ENCODE measurements at regions of chr7 and their contacts with region 1.

Region 1: DNA sequence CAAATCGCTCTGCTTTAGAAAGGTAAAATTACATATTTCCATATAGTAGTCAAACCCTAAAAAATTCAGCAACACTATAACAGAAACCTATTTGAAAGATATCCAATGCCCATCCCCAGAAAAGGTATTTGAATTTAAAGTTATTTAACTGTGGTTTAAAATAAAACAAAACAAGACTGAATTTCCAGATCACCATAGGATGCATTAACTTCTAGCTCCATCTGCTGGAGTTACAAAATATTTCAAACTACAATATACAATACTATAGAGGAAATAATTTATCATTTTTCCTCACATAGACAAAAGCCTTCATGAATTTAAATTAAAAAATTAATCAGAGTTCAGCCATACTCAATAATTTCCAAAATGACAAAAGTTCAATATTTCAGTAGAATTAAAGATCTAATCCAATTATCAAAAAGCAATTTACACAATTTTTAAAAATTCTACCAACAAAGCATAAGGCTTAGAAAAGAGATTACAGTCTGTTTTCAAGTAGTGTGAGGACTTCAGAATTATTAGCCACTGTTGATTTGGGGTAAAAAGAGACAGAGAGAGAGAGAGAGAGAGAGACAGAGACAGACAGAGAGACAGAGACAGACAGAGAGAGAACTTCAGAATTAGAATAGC is 75.9 kb downstream of the LMBR1 start:
- DNase-seq: no peak
- H3K4me3 ChIP-seq: no peak overlapping the region
- H3K27ac ChIP-seq: no peak overlapping the region
- H3K4me1 ChIP-seq: no peaks in the 10 kb centered on the region
- H3K27me3 ChIP-seq: no peaks in the 10 kb centered on the region
- CTCF ChIP-seq: peak in 3 of 5 experiments; percentile 24 to 28 (median 26)
- EP300 ChIP-seq: no peak
- POLR2A ChIP-seq: no peak

Region 2: GRCh38 chr7:155796381-155797261 is 1020.4 kb before region 1 on chr7:
- in situ Hi-C with region 1: loop called in 2 of 4 experiments (anchors 25 kb)
- intact Hi-C with region 1: no loop called
- DNase-seq: peak; percentile 73
- H3K4me3 ChIP-seq: no peak overlapping the region
- H3K27ac ChIP-seq: no peak overlapping the region
- H3K4me1 ChIP-seq: peaks cover 0 to 8% (median 8%) of the 10 kb centered on the region in 4 donors
- H3K27me3 ChIP-seq: peaks cover 57% of the 10 kb centered on the region
- CTCF ChIP-seq: peak; percentile 74 to 96 (median 90)
- EP300 ChIP-seq: no peak
- POLR2A ChIP-seq: no peak

Region 3: GRCh38 chr7:155815332-155816191 is 1001.5 kb before region 1 on chr7:
- in situ Hi-C with region 1: loop called in 1 of 4 experiments (anchors 25 kb)
- intact Hi-C with region 1: no loop called
- DNase-seq: peak; percentile 63
- H3K4me3 ChIP-seq: no peak overlapping the region
- H3K27ac ChIP-seq: no peak overlapping the region
- H3K4me1 ChIP-seq: peaks cover 0 to 23% (median 16%) of the 10 kb centered on the region in 4 donors
- H3K27me3 ChIP-seq: peaks cover 80% of the 10 kb centered on the region
- CTCF ChIP-seq: peak; percentile 28 to 72 (median 60)
- EP300 ChIP-seq: no peak
- POLR2A ChIP-seq: no peak

Region 4: GRCh38 chr7:156196649-156197048 is 620.4 kb before region 1 on chr7:
- in situ Hi-C with region 1: no loop called
- intact Hi-C with region 1: no loop called
- DNase-seq: no peak
- H3K4me3 ChIP-seq: no peak overlapping the region
- H3K27ac ChIP-seq: no peak overlapping the region
- H3K4me1 ChIP-seq: no peaks in the 10 kb centered on the region
- H3K27me3 ChIP-seq: no peaks in the 10 kb centered on the region
- CTCF ChIP-seq: no peak
- EP300 ChIP-seq: no peak
- POLR2A ChIP-seq: no peak